Transverse colon (tissue), 4 donors: ENCODE measurements at regions of chr18 and their contacts with region 1.

Region 1: DNA sequence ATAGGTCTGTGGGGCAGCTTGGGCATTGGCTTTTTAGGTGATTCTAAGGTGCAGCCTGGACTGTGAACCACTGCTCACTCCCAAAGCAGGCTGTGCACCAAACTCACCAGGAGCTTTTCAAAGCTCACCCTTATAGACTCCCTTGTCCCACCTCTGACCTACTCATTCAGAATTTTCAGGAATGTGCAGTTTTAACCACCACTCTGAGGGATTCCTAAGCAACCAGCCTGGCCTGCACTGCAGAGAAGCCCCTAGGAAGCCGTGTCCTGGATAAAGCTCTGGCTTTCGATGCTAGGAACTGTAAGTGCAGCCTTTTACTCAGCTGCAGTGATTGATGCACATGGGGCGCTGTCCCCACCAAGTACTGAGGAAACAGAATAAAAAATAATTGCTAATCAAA is 33.0 kb downstream of the MRO start:
- DNase-seq: no peak
- H3K4me3 ChIP-seq: no peak overlapping the region
- H3K27ac ChIP-seq: no peak overlapping the region
- H3K4me1 ChIP-seq: peaks cover 0 to 8% (median 2%) of the 10 kb centered on the region in 4 donors
- H3K27me3 ChIP-seq: no peaks in the 10 kb centered on the region
- CTCF ChIP-seq: no peak
- EP300 ChIP-seq: no peak
- POLR2A ChIP-seq: no peak

Region 2: GRCh38 chr18:50518788-50519546 is 267.9 kb before region 1 on chr18:
- in situ Hi-C with region 1: loop called in 3 of 4 experiments (anchors 10 to 25 kb)
- intact Hi-C with region 1: no loop called
- DNase-seq: no peak
- H3K4me3 ChIP-seq: no peak overlapping the region
- H3K27ac ChIP-seq: no peak overlapping the region
- H3K4me1 ChIP-seq: no peaks in the 10 kb centered on the region
- H3K27me3 ChIP-seq: no peaks in the 10 kb centered on the region
- CTCF ChIP-seq: no peak
- EP300 ChIP-seq: no peak
- POLR2A ChIP-seq: no peak

Region 3: DNA sequence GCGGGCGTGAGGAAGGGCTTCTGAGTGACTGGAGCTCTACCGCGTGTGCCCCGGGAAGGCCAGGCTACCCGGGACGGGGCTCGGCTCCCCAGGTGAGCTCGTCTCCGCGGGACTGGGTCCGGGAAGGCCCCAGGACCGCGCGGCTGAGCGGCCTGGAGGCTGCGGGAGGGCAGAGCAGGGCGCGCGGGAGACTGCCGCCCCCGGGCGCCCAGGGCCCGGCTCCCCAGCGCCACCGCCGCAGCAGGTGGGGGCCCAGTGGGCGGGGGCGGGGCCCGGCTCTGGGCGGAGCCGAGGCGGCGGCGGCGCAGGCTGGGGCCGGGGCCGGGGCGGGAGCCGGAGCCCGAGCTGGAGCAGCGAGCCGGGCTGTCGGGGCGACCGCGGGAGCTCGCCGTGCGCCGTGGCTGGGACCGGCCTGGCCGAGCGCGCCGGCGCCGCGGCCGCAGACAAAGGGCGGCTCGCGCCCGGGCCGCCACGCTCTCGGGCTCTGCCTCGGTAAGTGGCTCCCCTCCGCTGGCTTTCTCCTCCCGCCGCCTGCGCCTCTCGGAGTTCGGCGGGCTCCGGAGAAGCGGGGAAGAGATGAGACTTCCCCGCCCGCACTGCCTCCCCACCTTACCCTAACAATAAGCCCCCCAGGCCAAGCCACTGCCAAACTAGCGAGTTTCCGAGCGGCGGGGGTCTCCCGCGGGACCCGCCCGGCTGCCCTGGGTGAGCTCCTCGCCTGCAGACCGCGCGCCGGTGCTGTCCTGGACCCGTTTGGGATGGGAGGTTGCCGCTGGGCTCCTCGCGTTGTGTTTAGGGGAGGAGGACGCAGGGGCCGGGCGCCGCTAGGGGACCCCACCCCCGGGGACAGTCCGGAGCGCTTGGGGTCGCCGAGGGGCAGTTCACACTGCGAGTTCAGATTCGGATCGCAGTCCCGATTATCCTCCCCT is 226.8 kb before region 1 on chr18 and contains the start of gene MAPK4:
- in situ Hi-C with region 1: no loop called
- intact Hi-C with region 1: no loop called
- DNase-seq: peak; percentile 33
- H3K4me3 ChIP-seq: peak within 1 kb of the TSS; percentile 43 to 82 (median 59)
- H3K27ac ChIP-seq: peak within 1 kb of the TSS; percentile 50 to 83 (median 70)
- H3K4me1 ChIP-seq: peaks cover 12 to 20% (median 15%) of the 10 kb centered on the region in 4 donors
- H3K27me3 ChIP-seq: peaks cover 63% of the 10 kb centered on the region
- CTCF ChIP-seq: no peak
- EP300 ChIP-seq: no peak
- POLR2A ChIP-seq: no peak
- total RNA-seq, gene MAPK4: 1.6 to 20.1 (median 5.7) TPM

Region 4: GRCh38 chr18:50614838-50615237 is 172.0 kb before region 1 on chr18:
- in situ Hi-C with region 1: no loop called
- intact Hi-C with region 1: no loop called
- DNase-seq: no peak
- H3K4me3 ChIP-seq: no peak overlapping the region
- H3K27ac ChIP-seq: no peak overlapping the region
- H3K4me1 ChIP-seq: peaks cover 0 to under 1% (median 0%) of the 10 kb centered on the region in 4 donors
- H3K27me3 ChIP-seq: no peaks in the 10 kb centered on the region
- CTCF ChIP-seq: no peak
- EP300 ChIP-seq: no peak
- POLR2A ChIP-seq: no peak